CD8-positive, alpha-beta T cell (primary cell): ENCODE measurements at regions of chr1 and their contacts with region 1.

Region 1: DNA sequence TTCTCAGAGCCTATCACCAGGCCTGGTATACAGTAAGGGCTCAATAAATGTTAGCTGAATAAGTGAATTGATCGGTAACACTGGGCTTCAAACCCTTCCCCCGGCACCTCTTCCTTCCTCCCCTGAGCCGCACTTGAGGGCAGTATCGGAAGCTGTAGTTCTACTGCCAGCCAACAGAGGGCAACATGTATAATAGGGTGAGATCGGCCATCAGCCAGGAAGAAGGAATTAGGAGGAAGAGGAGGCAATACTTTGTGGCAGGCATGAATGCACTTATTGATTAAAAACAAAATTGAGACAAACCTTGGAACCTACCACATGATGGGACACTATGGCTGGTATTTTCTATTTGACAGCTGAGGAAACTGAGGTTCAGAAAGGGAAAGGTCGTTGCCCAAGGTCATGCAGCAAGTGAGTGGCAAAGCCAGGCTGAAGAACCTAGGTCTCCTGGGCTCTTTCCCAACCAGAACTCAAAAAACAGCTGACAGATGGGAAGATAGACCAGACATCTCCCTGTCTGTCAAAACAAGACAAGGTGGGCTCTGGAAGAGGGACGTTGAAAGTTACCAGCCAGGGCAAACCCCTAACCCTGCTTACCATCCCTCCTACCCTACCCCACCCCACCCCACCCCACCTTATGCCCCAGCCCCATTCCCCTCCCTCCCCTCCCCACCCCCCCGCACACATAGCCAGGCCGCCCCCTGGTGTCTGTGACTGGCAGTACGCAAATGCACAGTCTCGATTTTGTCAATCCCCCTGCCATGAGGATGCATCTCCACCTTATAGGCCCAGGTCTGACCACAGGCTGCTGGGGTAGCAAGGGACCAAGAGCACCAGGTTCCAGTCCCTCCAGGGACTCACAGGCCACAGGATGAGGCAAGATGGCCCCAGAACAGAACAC is 107.3 kb upstream of the RUNX3 start:
- DNase-seq: peak in 8 of 9 experiments; percentile 59 to 80 (median 70)
- ATAC-seq: peak; percentile 47
- H3K4me3 ChIP-seq: no peak overlapping the region
- H3K4me3 Mint-ChIP-seq: peak overlapping the region; percentile 5
- H3K27ac ChIP-seq: no peak overlapping the region
- H3K27ac Mint-ChIP-seq: no peak overlapping the region
- H3K4me1 ChIP-seq: peaks cover 65% of the 10 kb centered on the region
- H3K4me1 Mint-ChIP-seq: peaks cover 52% of the 10 kb centered on the region
- H3K27me3 ChIP-seq: no peaks in the 10 kb centered on the region
- H3K27me3 Mint-ChIP-seq: no peaks in the 10 kb centered on the region
- CTCF ChIP-seq: peak; percentile 72

Region 2: DNA sequence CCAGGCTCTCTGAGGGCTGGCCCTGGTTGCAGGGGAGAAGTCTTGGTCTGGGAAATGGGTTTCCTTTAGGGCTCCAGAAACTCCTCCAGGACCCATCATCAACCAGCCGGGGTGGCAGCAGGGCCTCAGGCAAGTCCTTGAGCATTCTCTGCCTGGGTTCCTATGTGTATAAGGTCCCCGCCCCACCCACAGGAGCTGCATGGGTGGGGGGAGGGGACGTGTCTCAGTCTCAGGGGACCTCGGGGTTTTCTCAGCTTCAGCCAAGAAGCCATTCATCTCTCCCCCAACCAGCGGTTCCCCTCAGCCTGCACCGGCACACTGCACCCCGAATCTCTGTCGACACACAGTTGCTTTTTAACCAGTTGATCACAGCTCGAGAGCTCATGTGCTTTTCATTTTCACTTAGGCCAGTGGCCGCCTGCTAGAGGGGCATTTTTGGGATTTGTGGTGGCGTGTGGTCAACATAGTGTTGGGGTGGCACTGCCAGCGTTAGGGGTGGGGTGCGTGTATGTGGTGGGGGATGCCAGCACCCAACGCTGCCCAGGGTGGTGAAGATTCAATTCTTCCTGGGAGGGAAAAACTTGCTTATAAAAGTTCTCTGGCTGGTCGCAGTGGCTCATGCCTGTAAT is 113.8 kb before region 1 on chr1:
- CTCF ChIA-PET with region 1: interaction called, 22 read pairs
- POLR2A ChIA-PET with region 1: interaction called, 15 read pairs
- intact Hi-C with region 1: no loop called
- DNase-seq: peak in 5 of 9 experiments; percentile 48 to 83 (median 60)
- ATAC-seq: peak; percentile 5
- H3K4me3 ChIP-seq: peak overlapping the region; percentile 16 to 23
- H3K4me3 Mint-ChIP-seq: peak overlapping the region; percentile 60
- H3K27ac ChIP-seq: peak overlapping the region; percentile 56 to 96
- H3K27ac Mint-ChIP-seq: peak overlapping the region; percentile 99
- H3K4me1 ChIP-seq: peaks cover 88% of the 10 kb centered on the region
- H3K4me1 Mint-ChIP-seq: peaks cover 78% of the 10 kb centered on the region
- H3K27me3 ChIP-seq: no peaks in the 10 kb centered on the region
- H3K27me3 Mint-ChIP-seq: no peaks in the 10 kb centered on the region
- CTCF ChIP-seq: no peak

Region 3: GRCh38 chr1:24964811-24965570 is 72.4 kb before region 1 on chr1:
- CTCF ChIA-PET with region 1: interaction called, 163 read pairs
- POLR2A ChIA-PET with region 1: interaction called, 25 read pairs
- intact Hi-C with region 1: loop called (anchors 1 kb)
- DNase-seq: peak; percentile 77 to 98 (median 87)
- ATAC-seq: peak; percentile 78
- H3K4me3 ChIP-seq: peak overlapping the region; percentile 60 to 64
- H3K4me3 Mint-ChIP-seq: peak overlapping the region; percentile 90
- H3K27ac ChIP-seq: peak overlapping the region; percentile 67 to 79
- H3K27ac Mint-ChIP-seq: peak overlapping the region; percentile 99
- H3K4me1 ChIP-seq: peaks cover 84% of the 10 kb centered on the region
- H3K4me1 Mint-ChIP-seq: peaks cover 78% of the 10 kb centered on the region
- H3K27me3 ChIP-seq: no peaks in the 10 kb centered on the region
- H3K27me3 Mint-ChIP-seq: no peaks in the 10 kb centered on the region
- CTCF ChIP-seq: no peak

Region 4: DNA sequence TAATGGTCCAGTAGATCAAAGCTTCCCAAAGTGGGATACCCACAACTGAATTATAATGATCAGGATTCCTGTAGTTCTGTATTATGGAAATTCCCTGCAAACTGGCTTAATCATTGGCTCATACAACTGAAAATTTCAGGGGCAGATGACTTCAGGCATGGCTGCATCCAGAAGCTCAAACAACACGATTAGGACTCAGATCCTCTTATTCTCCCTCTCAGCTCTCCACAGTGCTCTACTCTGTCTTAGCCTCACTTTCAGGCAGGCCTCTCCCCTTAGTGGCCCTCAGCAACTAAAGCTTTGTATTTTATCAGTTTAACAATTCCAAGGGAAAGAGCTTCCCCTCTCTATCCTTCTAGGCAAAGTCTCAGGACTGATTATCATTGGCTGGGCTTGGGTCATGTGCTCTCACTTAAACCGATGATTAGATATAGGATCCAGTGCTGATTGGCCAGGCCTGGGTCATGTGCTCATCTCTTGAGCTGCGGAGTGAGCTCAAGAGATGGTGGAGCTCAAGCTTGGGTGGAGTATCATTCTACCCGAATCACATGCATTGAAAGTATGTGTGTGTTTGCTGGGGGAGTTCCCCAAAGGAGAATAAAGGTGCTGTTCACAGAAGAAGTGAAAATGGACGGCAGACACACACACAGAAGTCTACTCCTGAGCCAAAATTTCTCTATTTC is 49.4 kb before region 1 on chr1:
- CTCF ChIA-PET with region 1: interaction called, 115 read pairs
- POLR2A ChIA-PET with region 1: interaction called, 5 read pairs
- intact Hi-C with region 1: loop called (anchors 1 to 2 kb)
- DNase-seq: peak in 2 of 9 experiments; percentile 33 to 71
- ATAC-seq: peak; percentile 45
- H3K4me3 ChIP-seq: no peak overlapping the region
- H3K4me3 Mint-ChIP-seq: peak overlapping the region; percentile 53
- H3K27ac ChIP-seq: no peak overlapping the region
- H3K27ac Mint-ChIP-seq: peak overlapping the region; percentile 83
- H3K4me1 ChIP-seq: peaks cover 100% of the 10 kb centered on the region
- H3K4me1 Mint-ChIP-seq: peaks cover 97% of the 10 kb centered on the region
- H3K27me3 ChIP-seq: no peaks in the 10 kb centered on the region
- H3K27me3 Mint-ChIP-seq: no peaks in the 10 kb centered on the region
- CTCF ChIP-seq: no peak

Region 5: DNA sequence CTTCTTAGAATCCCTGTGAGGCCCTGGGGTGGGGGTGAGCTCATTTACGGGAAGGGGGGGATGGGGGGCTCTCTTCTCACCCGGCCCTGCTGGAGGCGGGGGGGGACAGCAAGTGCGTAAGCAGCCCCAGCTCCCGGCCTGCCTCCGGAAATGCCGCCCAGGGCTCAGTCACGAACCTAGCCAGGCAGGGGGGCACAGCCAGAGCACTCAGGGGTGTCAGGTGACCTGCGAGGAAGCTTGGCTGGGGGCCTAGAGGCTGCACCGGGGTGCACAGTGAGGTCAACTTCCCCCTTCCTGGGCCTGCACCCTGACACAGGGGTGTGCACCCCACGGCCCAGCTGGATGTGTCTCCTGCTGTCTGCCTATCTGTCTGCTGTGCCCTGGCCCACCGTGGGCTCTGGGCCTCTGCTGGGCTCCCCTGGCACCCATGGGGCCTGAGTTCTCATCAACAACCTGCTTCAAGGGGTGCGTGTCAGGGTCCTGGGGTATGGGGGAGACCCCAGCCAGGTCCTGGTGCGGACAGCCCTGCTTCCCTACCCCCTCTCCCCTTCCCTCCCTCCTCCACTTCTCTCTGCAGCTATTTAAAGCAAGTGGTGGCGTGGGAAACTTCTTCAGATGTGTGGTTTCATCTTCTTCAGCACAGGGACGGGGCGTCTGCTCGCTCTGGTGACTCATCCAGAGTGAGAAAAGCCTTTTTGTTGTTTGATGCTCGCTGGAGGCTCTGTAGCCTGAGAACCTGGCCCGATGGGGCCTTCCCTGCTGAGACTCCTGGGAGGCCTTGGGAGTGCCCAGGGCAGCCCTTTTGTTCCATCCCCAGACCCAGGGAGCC is 14.8 kb before region 1 on chr1:
- CTCF ChIA-PET with region 1: interaction called, 95 read pairs
- POLR2A ChIA-PET with region 1: interaction called, 15 read pairs
- intact Hi-C with region 1: loop called (anchors 1 kb)
- DNase-seq: peak; percentile 91 to 100 (median 95)
- ATAC-seq: peak; percentile 83
- H3K4me3 ChIP-seq: peak overlapping the region; percentile 43 to 45
- H3K4me3 Mint-ChIP-seq: peak overlapping the region; percentile 58
- H3K27ac ChIP-seq: peak overlapping the region; percentile 83 to 100
- H3K27ac Mint-ChIP-seq: peak overlapping the region; percentile 93
- H3K4me1 ChIP-seq: peaks cover 90% of the 10 kb centered on the region
- H3K4me1 Mint-ChIP-seq: peaks cover 88% of the 10 kb centered on the region
- H3K27me3 ChIP-seq: no peaks in the 10 kb centered on the region
- H3K27me3 Mint-ChIP-seq: no peaks in the 10 kb centered on the region
- CTCF ChIP-seq: no peak